BJ (cell line): ENCODE measurements at regions of chr2 and their contacts with region 1.

Region 1: GRCh38 chr2:66429071-66429477 is 5.9 kb upstream of the MEIS1 start:
- DNase-seq: no peak
- H3K4me3 ChIP-seq: no peak overlapping the region
- H3K27me3 ChIP-seq: peaks cover 14% of the 10 kb centered on the region
- CTCF ChIP-seq: peak; percentile 87

Region 2: DNA sequence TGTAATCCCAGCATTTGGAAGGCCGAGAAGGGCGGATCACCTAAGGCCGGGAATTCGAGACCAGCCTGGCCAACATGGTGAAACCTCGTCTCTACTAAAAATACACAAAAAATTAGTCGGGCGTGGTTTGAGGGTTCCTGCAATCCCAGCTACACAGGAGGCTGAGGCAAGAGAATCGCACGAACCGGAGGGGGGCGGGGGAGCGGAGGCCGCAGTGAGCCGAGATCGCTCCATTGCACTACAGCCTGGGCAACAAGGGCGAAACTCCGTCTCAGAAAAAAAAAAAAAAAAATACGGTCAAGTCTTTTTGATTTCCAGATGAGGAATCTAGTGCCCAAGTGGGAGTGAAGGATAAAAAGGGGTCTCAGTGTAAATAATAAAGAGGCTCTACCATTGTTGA is 10.7 kb before region 1 on chr2:
- CTCF ChIA-PET with region 1: interaction called, 19 read pairs
- POLR2A ChIA-PET with region 1: no interaction called
- DNase-seq: no peak
- H3K4me3 ChIP-seq: no peak overlapping the region
- H3K27me3 ChIP-seq: no peaks in the 10 kb centered on the region; the same call in 1 of the 2 replicates
- CTCF ChIP-seq: no peak

Region 3: GRCh38 chr2:66457545-66457944 is 28.5 kb after region 1 on chr2:
- CTCF ChIA-PET with region 1: no interaction called
- POLR2A ChIA-PET with region 1: no interaction called
- DNase-seq: no peak
- H3K4me3 ChIP-seq: no peak overlapping the region
- H3K27me3 ChIP-seq: no peaks in the 10 kb centered on the region
- CTCF ChIP-seq: no peak

Region 4: GRCh38 chr2:66574701-66575624 is 145.9 kb after region 1 on chr2:
- CTCF ChIA-PET with region 1: interaction called, 22 read pairs
- POLR2A ChIA-PET with region 1: interaction called, 5 read pairs
- DNase-seq: no peak
- H3K4me3 ChIP-seq: peak overlapping the region; percentile 55
- H3K27me3 ChIP-seq: no peaks in the 10 kb centered on the region
- CTCF ChIP-seq: peak; percentile 59

Region 5: GRCh38 chr2:67650291-67651133 is 1221.4 kb after region 1 on chr2:
- CTCF ChIA-PET with region 1: interaction called, 14 read pairs
- POLR2A ChIA-PET with region 1: no interaction called
- DNase-seq: peak; percentile 67
- H3K4me3 ChIP-seq: no peak overlapping the region
- H3K27me3 ChIP-seq: no peaks in the 10 kb centered on the region
- CTCF ChIP-seq: peak; percentile 90

Region 6: DNA sequence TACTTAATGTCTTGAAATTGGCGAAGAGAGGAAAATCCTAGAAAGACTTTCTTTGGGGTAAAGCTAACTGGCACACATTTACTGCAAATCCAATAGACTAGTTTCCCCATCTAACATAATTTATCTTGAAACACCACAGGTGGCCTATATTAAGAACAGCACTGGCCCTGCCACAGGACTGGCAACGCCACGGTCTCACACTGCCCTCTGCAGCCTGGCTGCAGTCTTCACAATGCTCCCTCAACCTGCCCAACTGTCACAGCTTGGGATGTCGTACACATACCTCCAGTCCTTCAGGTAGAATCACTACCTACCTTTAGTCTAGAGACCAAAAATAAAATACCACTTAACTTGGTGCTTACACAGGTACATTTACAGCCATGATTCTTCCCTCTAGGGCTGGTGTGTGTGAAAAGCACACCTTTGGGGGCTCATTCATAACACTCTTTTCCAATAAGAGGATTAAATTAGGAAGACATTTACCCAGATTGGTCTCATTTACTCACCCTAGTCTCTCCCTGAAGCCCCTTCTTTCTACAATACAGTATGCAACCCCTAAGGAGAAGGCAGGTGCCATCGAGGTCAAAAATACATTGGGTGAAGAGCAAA is 1411.5 kb after region 1 on chr2:
- CTCF ChIA-PET with region 1: interaction called, 17 read pairs
- POLR2A ChIA-PET with region 1: no interaction called
- DNase-seq: no peak
- H3K4me3 ChIP-seq: no peak overlapping the region
- H3K27me3 ChIP-seq: no peaks in the 10 kb centered on the region
- CTCF ChIP-seq: peak; percentile 91

Region 7: GRCh38 chr2:68031542-68032160 is 1602.6 kb after region 1 on chr2:
- CTCF ChIA-PET with region 1: interaction called, 13 read pairs
- POLR2A ChIA-PET with region 1: interaction called, 4 read pairs
- DNase-seq: no peak
- H3K4me3 ChIP-seq: no peak overlapping the region
- H3K27me3 ChIP-seq: no peaks in the 10 kb centered on the region
- CTCF ChIP-seq: peak; percentile 61